Ascending aorta (tissue), 2 donors: ENCODE measurements at regions of chr7 and their contacts with region 1.

Region 1: GRCh38 chr7:4744391-4745264 is 30.8 kb upstream of the AP5Z1 start:
- DNase-seq: peak; percentile 90 to 99
- H3K4me3 ChIP-seq: peak overlapping the region; percentile 45 to 53
- H3K27ac ChIP-seq: peak overlapping the region; percentile 81 to 94
- H3K4me1 ChIP-seq: peaks cover 3 to 36% of the 10 kb centered on the region in 2 donors
- H3K27me3 ChIP-seq: no peaks in the 10 kb centered on the region
- CTCF ChIP-seq: no peak

Region 2: DNA sequence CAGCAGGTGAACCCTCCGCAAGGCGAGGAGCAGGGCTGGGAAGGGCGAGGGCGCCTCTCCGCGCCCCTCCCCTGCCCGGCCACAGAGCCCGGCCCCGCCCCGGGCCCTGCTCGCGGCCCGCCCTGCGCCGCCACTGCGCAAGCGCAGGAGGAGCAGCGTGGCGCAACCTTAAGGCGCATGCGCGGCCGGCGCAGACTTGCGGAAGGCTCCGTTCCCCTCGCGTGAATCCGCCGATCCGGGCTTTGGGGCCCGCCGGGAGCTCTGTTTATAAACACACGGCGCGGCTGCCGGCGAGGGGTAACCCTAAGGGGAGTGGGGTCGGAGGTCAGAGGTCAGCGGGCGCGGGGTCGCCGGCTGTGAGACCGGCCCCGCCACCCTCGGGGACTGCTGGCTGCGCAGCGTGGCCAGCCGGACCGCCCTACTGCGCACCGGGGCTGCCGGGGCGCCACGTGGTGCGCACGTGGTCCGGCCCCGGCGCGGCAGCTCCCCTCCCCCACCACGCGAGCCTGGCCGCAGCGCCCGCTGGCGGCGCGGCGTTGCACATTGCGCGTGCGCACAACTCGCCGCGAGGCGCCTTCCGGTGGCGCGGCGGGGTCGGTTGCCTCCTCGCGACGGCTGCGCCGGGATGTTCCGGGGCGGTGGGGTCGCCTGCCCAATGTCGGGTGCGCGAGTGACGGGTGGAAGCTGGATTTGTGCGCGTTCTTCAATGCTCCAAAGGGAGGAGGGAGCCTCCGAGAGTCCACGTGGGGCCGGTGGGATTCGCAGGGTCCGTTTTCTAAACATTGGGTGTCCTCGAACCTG is 102.8 kb before region 1 on chr7:
- intact Hi-C with region 1: loop called (anchors 2 kb)
- DNase-seq: peak; percentile 63 to 97
- H3K4me3 ChIP-seq: peak overlapping the region; percentile 67 to 76
- H3K27ac ChIP-seq: peak overlapping the region; percentile 87 to 94
- H3K4me1 ChIP-seq: peaks cover 0 to 4% of the 10 kb centered on the region in 2 donors
- H3K27me3 ChIP-seq: no peaks in the 10 kb centered on the region
- CTCF ChIP-seq: peak; percentile 15 to 90 (median 41)

Region 3: GRCh38 chr7:4665661-4666060 is 79.0 kb before region 1 on chr7:
- intact Hi-C with region 1: loop called (anchors 1 kb)
- DNase-seq: no peak
- H3K4me3 ChIP-seq: no peak overlapping the region
- H3K27ac ChIP-seq: peak overlapping the region; percentile 77 to 82
- H3K4me1 ChIP-seq: peaks cover 7 to 17% of the 10 kb centered on the region in 2 donors
- H3K27me3 ChIP-seq: no peaks in the 10 kb centered on the region
- CTCF ChIP-seq: no peak

Region 4: GRCh38 chr7:4693749-4694148 is 50.9 kb before region 1 on chr7:
- intact Hi-C with region 1: loop called (anchors 2 kb)
- DNase-seq: no peak
- H3K4me3 ChIP-seq: peak overlapping the region in 1 of 2 donors; percentile 47
- H3K27ac ChIP-seq: peak overlapping the region; percentile 94 to 95
- H3K4me1 ChIP-seq: peaks cover 22 to 56% of the 10 kb centered on the region in 2 donors
- H3K27me3 ChIP-seq: no peaks in the 10 kb centered on the region
- CTCF ChIP-seq: no peak

Region 5: DNA sequence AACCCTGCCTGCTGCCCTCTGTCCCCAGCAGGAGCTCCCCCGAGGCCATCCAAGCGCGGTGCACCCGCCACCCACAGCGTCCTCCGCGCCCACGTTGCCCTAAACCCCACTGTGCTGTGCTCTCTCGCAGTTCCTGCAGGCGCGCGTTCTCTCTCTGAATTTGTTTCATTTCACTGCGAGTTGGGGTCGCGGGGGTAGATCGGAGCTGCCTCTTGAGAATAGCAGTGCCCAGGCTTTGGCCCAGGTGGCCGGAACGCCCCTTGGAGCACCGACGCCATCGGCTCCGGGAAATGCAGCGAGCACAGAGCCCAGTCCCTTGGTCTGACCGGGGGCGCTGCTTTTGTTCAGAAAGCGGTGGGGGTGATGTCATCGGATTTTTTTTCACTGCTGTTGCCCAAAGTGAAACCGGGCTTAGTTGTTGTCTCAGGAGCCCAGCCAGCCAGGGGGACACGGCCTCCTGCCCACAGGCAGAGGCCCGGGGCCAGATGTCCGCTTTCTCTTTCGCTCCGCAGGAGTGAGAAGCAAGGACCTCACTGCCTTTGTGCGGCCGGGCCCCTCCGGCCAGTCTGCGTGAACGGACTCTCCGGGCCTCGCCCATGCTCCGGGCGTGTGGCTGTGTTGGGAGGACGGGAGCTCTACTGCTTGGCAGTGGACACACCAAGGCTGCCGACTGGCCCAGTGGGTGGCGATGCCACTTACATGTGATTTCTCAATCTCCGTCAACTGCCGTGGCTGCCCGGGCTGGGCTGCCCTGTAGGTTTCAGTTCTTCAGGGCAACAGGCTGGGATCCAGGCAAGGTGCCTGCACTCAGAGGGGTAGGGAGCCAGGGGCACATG is 19.4 kb before region 1 on chr7:
- intact Hi-C with region 1: loop called (anchors 1 kb)
- DNase-seq: peak; percentile 56 to 93
- H3K4me3 ChIP-seq: peak overlapping the region; percentile 62 to 82
- H3K27ac ChIP-seq: peak overlapping the region; percentile 95 to 98
- H3K4me1 ChIP-seq: peaks cover 16 to 34% of the 10 kb centered on the region in 2 donors
- H3K27me3 ChIP-seq: no peaks in the 10 kb centered on the region
- CTCF ChIP-seq: peak in 2 of 3 experiments; percentile 2 to 21

Region 6: DNA sequence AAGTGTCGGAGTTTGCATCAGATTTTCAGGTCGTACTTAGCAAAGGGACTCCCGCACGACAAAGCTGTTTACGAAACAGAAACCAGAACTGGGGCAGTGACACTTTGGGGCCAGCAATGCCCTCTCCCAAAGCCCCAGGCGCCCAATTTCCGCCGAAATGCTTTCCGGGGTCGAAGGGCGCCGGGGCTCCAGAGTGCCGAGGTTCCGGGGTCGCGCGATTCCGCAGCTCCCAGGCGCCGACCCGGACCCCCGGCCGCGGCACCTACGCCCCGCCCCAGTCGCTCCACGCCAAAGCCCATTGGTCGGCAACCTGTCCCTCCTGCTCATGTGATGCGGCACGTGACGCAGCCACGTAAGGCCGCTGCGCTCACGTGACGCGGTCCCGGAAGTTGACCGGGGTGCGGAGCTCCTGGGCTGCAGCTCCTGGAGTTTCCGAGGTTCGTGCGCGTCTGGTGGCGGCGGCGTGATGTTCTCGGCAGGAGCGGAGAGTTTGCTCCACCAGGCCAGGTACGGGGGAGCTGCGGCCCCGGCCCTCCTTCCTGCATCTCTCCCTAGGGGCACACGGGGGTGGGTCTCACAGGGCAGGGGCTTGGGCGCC is 30.7 kb after region 1 on chr7 and contains the start of gene AP5Z1:
- intact Hi-C with region 1: loop called (anchors 1 kb)
- DNase-seq: peak; percentile 83 to 97
- H3K4me3 ChIP-seq: peak within 1 kb of the TSS; percentile 98 to 100
- H3K27ac ChIP-seq: peak within 1 kb of the TSS; percentile 90 to 95
- H3K4me1 ChIP-seq: peaks cover 8 to 12% of the 10 kb centered on the region in 2 donors
- H3K27me3 ChIP-seq: no peaks in the 10 kb centered on the region
- CTCF ChIP-seq: no peak
- total RNA-seq, gene AP5Z1: 115 TPM